Activated CD4-positive, alpha-beta T cell treated with anti-CD3 and anti-CD28 coated beads for 36 hours (primary cell): ENCODE measurements at regions of chr4 and their contacts with region 1.

Region 1: GRCh38 chr4:48891028-48891619 is 15.4 kb downstream of the OCIAD2 start:
- DNase-seq: no peak
- ATAC-seq: no peak
- H3K4me3 Mint-ChIP-seq: no peak overlapping the region
- H3K27ac Mint-ChIP-seq: no peak overlapping the region
- H3K4me1 Mint-ChIP-seq: peaks cover 3% of the 10 kb centered on the region
- H3K27me3 Mint-ChIP-seq: no peaks in the 10 kb centered on the region

Region 2: GRCh38 chr4:47543331-47543730 is 1347.8 kb before region 1 on chr4:
- CTCF ChIA-PET with region 1: no interaction called
- POLR2A ChIA-PET with region 1: no interaction called
- intact Hi-C with region 1: loop called in 1 of 2 experiments (anchors 5 kb)
- DNase-seq: no peak
- ATAC-seq: no peak
- H3K4me3 Mint-ChIP-seq: no peak overlapping the region
- H3K27ac Mint-ChIP-seq: no peak overlapping the region
- H3K4me1 Mint-ChIP-seq: no peaks in the 10 kb centered on the region
- H3K27me3 Mint-ChIP-seq: no peaks in the 10 kb centered on the region